ENCODE measurements at regions of chr2 and their contacts with region 1.

Region 1: GRCh38 chr2:135931776-135932443 is 53.5 kb downstream of the DARS1 start:
- DNase-seq: no peak
- ATAC-seq: no peak
- H3K4me3 ChIP-seq: no peak overlapping the region
- H3K4me3 Mint-ChIP-seq: peak overlapping the region in 1 of 10 donors; percentile 24
- H3K27ac ChIP-seq: no peak overlapping the region
- H3K27ac Mint-ChIP-seq: peak overlapping the region in 3 of 9 donors; percentile 6 to 64 (median 38)
- H3K4me1 ChIP-seq: no peaks in the 10 kb centered on the region
- H3K4me1 Mint-ChIP-seq: peaks cover 4 to 57% (median 9%) of the 10 kb centered on the region in 7 donors
- H3K27me3 ChIP-seq: no peaks in the 10 kb centered on the region
- H3K27me3 Mint-ChIP-seq: no peaks in the 10 kb centered on the region

Region 2: GRCh38 chr2:135709992-135710391 is 221.9 kb before region 1 on chr2:
- CTCF ChIA-PET with region 1: no interaction called
- POLR2A ChIA-PET with region 1: no interaction called
- intact Hi-C with region 1: no loop called
- DNase-seq: peak; percentile 37 to 82 (median 69)
- ATAC-seq: peak; percentile 80
- H3K4me3 ChIP-seq: no peak overlapping the region
- H3K4me3 Mint-ChIP-seq: no peak overlapping the region
- H3K27ac ChIP-seq: no peak overlapping the region
- H3K27ac Mint-ChIP-seq: peak overlapping the region in 2 of 9 donors; percentile 3 to 16
- H3K4me1 ChIP-seq: no peaks in the 10 kb centered on the region
- H3K4me1 Mint-ChIP-seq: peaks cover 0 to 4% (median 0%) of the 10 kb centered on the region in 7 donors
- H3K27me3 ChIP-seq: no peaks in the 10 kb centered on the region
- H3K27me3 Mint-ChIP-seq: no peaks in the 10 kb centered on the region

Region 3: DNA sequence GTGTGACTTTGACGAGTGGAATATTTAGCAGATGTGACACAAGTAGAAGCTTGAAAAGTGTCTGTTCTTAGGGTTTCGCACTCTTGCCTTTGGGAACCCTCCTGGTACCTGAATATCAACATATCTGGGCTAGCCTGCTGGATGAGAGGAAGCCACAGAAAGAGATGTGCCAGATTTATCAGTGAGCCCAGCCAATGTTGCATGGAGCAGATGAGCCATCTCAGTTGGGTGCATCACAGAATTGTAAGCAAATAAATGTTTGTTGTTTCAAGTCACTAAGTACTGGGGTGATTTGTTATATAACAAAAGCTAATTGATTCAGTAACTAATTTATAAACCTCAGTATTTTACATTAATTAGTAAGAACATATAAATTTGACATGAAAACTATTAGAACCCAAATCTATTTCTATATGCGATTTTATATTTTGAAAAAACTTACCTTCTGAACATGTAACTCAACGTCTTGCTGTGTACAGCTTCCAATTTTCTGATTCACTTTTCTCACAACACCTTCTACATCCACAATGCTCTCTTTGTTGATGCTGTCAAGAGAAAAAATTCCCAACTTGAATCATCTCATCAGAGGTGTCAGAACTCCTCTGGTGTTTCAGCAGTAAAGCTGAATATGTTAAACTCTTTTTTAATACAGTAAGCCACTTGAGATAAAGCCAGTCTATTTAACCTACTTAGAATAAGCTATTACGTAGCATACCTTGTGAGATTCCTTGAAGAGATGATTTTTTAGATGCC is 11.2 kb after region 1 on chr2:
- CTCF ChIA-PET with region 1: interaction called, 5 read pairs
- POLR2A ChIA-PET with region 1: no interaction called
- intact Hi-C with region 1: loop called in 1 of 2 experiments (anchors 1 kb)
- DNase-seq: no peak
- ATAC-seq: no peak
- H3K4me3 ChIP-seq: no peak overlapping the region
- H3K4me3 Mint-ChIP-seq: no peak overlapping the region
- H3K27ac ChIP-seq: no peak overlapping the region
- H3K27ac Mint-ChIP-seq: no peak overlapping the region
- H3K4me1 ChIP-seq: peaks cover 0 to 1% of the 10 kb centered on the region in 2 donors
- H3K4me1 Mint-ChIP-seq: peaks cover 22 to 59% (median 49%) of the 10 kb centered on the region in 7 donors
- H3K27me3 ChIP-seq: no peaks in the 10 kb centered on the region
- H3K27me3 Mint-ChIP-seq: no peaks in the 10 kb centered on the region